Dorsolateral prefrontal cortex (tissue), 120 donors: ENCODE measurements at regions of chr16 and their contacts with region 1.

Region 1: DNA sequence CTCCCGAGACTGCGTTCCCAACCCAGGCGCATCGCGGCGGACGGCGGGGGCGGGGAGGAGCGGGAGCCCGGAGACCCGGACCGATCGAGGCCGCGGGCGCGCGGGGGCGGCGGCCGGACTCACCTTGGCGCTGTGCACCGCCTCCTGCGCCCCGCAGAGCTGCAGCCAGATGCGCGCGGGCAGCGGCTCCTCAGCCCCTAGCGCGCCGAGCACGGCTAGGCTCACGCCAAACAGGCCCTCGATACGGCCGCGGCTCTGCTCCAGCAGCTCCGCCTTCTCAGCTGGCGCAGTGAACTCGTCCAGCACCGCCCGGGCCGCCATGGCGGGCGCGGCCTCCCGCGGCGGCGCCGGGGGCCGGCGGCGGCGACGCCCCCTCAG is 339 bp downstream of the N4BP1 start:
- DNase-seq: peak in 4 of 10 donors; percentile 36 to 57 (median 52)
- H3K4me3 ChIP-seq: peak overlapping the region; percentile 62 to 99 (median 93)
- H3K27ac ChIP-seq: peak overlapping the region in 58 of 59 donors; percentile 31 to 99 (median 94)
- H3K27me3 ChIP-seq: no peaks in the 10 kb centered on the region
- CTCF ChIP-seq: no peak

Region 2: DNA sequence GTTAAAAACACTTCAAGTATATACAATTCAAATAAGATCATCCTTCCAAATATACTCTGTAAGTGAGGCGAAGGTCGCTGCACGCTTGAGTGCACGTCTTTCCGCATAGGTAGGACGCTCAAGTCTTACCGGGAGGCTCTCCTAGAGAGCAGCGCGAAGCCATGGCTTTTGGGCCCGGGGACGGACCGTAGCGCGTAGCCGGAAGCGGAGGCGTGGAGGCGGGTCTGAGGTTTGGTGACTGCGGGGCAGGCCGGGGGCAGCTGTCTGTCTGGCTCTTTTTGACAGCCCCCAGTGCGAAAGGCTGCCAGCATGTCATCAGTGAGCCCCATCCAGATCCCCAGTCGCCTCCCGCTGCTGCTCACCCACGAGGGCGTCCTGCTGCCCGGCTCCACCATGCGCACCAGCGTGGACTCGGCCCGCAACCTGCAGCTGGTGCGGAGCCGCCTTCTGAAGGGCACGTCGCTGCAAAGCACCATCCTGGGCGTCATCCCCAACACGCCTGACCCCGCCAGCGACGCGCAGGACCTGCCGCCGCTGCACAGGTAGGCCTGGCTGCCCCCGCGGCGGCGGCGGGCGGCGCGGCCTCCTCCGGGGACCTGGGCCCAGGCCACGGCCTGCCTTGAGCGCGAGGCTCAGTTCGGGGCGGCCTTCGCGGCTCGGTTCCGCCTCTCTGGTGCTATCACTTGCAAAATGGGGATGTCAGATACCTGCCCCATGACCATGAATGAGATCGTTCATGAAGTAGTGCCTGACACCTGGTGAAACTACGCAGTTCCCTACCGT is 365.4 kb before region 1 on chr16 and contains the start of gene LONP2:
- intact Hi-C with region 1: loop called in 1 of 2 experiments (anchors 10 kb)
- DNase-seq: peak; percentile 84 to 96 (median 92)
- H3K4me3 ChIP-seq: peak within 1 kb of the TSS; percentile 62 to 99 (median 93)
- H3K27ac ChIP-seq: peak within 1 kb of the TSS in 58 of 59 donors; percentile 34 to 95 (median 86)
- H3K27me3 ChIP-seq: no peaks in the 10 kb centered on the region
- CTCF ChIP-seq: peak in 33 of 56 donors; percentile 9 to 52 (median 32)
- total RNA-seq, gene LONP2: 68.2 to 129 (median 106) TPM

Region 3: GRCh38 chr16:48365581-48366164 is 244.0 kb before region 1 on chr16:
- intact Hi-C with region 1: loop called in 1 of 2 experiments (anchors 5 kb)
- DNase-seq: peak; percentile 68 to 91 (median 86)
- H3K4me3 ChIP-seq: peak overlapping the region; percentile 41 to 75 (median 64)
- H3K27ac ChIP-seq: peak overlapping the region in 58 of 59 donors; percentile 11 to 88 (median 76)
- H3K27me3 ChIP-seq: no peaks in the 10 kb centered on the region
- CTCF ChIP-seq: peak in 28 of 56 donors; percentile 5 to 51 (median 24)

Region 4: DNA sequence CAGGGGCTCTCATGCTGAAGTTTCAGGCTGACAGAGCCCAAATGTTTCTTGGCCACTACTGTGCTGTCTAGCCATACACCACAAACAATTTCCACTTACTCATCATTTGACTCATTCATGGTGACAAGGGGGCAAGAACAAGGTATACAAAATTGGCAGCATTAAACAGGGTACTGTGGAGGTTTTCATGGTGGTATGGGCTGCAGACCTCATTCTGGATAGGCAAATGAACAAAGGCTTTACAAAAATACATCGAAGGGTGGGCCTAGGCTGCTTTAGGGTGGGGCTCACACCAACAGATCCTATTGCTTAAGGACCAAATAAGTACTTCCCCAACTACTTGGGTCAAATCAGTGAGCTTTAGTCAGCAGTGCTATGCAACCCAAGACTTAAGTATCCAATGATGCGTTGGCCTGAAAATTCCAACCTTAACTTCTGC is 52.7 kb before region 1 on chr16:
- intact Hi-C with region 1: loop called (anchors 5 kb)
- DNase-seq: no peak
- H3K4me3 ChIP-seq: no peak overlapping the region
- H3K27ac ChIP-seq: peak overlapping the region in 38 of 59 donors; percentile 6 to 90 (median 66)
- H3K27me3 ChIP-seq: no peaks in the 10 kb centered on the region
- CTCF ChIP-seq: no peak